ENCODE measurements at regions of chr18 and their contacts with region 1.

Region 1: GRCh38 chr18:74597662-74598349 is at the start of gene ZNF407:
- DNase-seq: peak; percentile 75 to 93 (median 83)
- ATAC-seq: peak; percentile 76
- H3K4me3 ChIP-seq: peak within 1 kb of the TSS; percentile 87
- H3K4me3 Mint-ChIP-seq: peak within 1 kb of the TSS; percentile 98
- H3K27ac ChIP-seq: peak within 1 kb of the TSS; percentile 96 to 98
- H3K27ac Mint-ChIP-seq: peak within 1 kb of the TSS; percentile 100
- H3K4me1 ChIP-seq: peaks cover 25% of the 10 kb centered on the region
- H3K4me1 Mint-ChIP-seq: peaks cover 71% of the 10 kb centered on the region
- H3K27me3 ChIP-seq: no peaks in the 10 kb centered on the region
- H3K27me3 Mint-ChIP-seq: no peaks in the 10 kb centered on the region
- CTCF ChIP-seq: no peak
- total RNA-seq, gene ZNF407: 23.2 to 24.7 TPM

Region 2: DNA sequence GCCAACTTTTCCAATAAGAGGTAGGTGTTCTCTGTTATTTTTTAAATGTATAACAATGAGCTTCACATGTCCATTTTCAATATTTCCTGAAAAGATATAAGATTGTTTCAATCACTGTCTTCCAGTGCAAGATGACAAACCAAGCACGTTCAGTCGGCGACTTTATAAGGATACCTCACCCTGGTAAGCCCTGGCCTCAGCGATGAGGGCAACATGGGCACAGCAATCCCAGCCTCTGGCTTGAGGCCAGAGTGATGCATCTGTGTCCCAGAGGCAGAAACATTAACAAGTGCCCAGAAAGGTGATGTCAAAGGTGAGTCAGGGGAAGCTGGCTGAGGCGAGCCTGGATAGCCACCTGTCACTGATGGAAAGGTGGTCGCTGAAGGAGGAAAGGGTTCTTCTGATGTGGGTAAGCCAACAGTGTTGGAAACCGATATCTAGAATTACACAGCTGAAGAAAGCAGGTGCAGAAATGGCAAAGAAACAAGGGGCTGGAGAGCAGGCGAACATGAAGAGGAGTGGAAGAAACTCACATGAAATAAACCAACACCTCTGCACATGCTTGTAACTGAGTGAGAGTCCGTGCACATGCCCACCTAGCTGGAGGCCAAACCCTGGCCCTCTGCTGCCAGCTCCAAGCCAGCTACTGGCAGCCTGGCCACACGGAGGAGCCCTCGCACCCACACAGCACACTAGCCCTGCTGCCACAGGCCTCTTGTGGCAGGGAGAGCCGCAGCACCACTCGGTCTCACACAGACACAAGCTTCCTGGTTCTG is 515.7 kb before region 1 on chr18:
- CTCF ChIA-PET with region 1: no interaction called
- POLR2A ChIA-PET with region 1: interaction called, 12 read pairs
- intact Hi-C with region 1: no loop called
- DNase-seq: peak; percentile 43 to 84 (median 62)
- ATAC-seq: peak; percentile 97
- H3K4me3 ChIP-seq: peak overlapping the region; percentile 38
- H3K4me3 Mint-ChIP-seq: peak overlapping the region; percentile 78
- H3K27ac ChIP-seq: peak overlapping the region; percentile 61 to 74
- H3K27ac Mint-ChIP-seq: peak overlapping the region; percentile 85
- H3K4me1 ChIP-seq: peaks cover 16% of the 10 kb centered on the region
- H3K4me1 Mint-ChIP-seq: peaks cover 22% of the 10 kb centered on the region
- H3K27me3 ChIP-seq: no peaks in the 10 kb centered on the region
- H3K27me3 Mint-ChIP-seq: no peaks in the 10 kb centered on the region
- CTCF ChIP-seq: peak; percentile 60

Region 3: GRCh38 chr18:74291771-74292540 is 305.9 kb before region 1 on chr18 and contains the start of gene CYB5A:
- CTCF ChIA-PET with region 1: no interaction called
- POLR2A ChIA-PET with region 1: interaction called, 3 read pairs
- intact Hi-C with region 1: loop called in 1 of 2 experiments (anchors 5 kb)
- DNase-seq: peak; percentile 97 to 99 (median 98)
- ATAC-seq: peak; percentile 96
- H3K4me3 ChIP-seq: peak within 1 kb of the TSS; percentile 99
- H3K4me3 Mint-ChIP-seq: no peak within 1 kb of the TSS
- H3K27ac ChIP-seq: peak within 1 kb of the TSS in 1 of 2 donors; percentile 61
- H3K27ac Mint-ChIP-seq: peak within 1 kb of the TSS; percentile 35
- H3K4me1 ChIP-seq: peaks cover 19% of the 10 kb centered on the region
- H3K4me1 Mint-ChIP-seq: peaks cover 12% of the 10 kb centered on the region
- H3K27me3 ChIP-seq: no peaks in the 10 kb centered on the region
- H3K27me3 Mint-ChIP-seq: no peaks in the 10 kb centered on the region
- CTCF ChIP-seq: peak; percentile 20
- total RNA-seq, gene CYB5A: 3.7 to 4.1 TPM

Region 4: GRCh38 chr18:74370115-74370514 is 227.7 kb before region 1 on chr18:
- CTCF ChIA-PET with region 1: no interaction called
- POLR2A ChIA-PET with region 1: interaction called, 9 read pairs
- intact Hi-C with region 1: loop called in 1 of 2 experiments (anchors 1 kb)
- DNase-seq: no peak
- ATAC-seq: no peak
- H3K4me3 ChIP-seq: no peak overlapping the region
- H3K4me3 Mint-ChIP-seq: no peak overlapping the region
- H3K27ac ChIP-seq: no peak overlapping the region
- H3K27ac Mint-ChIP-seq: no peak overlapping the region
- H3K4me1 ChIP-seq: peaks cover 31% of the 10 kb centered on the region
- H3K4me1 Mint-ChIP-seq: peaks cover 46% of the 10 kb centered on the region
- H3K27me3 ChIP-seq: no peaks in the 10 kb centered on the region
- H3K27me3 Mint-ChIP-seq: no peaks in the 10 kb centered on the region
- CTCF ChIP-seq: no peak

Region 5: GRCh38 chr18:74631623-74632283 is 33.9 kb after region 1 on chr18:
- CTCF ChIA-PET with region 1: interaction called, 4 read pairs
- POLR2A ChIA-PET with region 1: interaction called, 53 read pairs
- intact Hi-C with region 1: no loop called
- DNase-seq: peak in 9 of 14 experiments; percentile 1 to 61 (median 36)
- ATAC-seq: peak; percentile 90
- H3K4me3 ChIP-seq: peak overlapping the region; percentile 34
- H3K4me3 Mint-ChIP-seq: peak overlapping the region; percentile 81
- H3K27ac ChIP-seq: peak overlapping the region; percentile 13 to 66
- H3K27ac Mint-ChIP-seq: peak overlapping the region; percentile 90
- H3K4me1 ChIP-seq: peaks cover 27% of the 10 kb centered on the region
- H3K4me1 Mint-ChIP-seq: peaks cover 59% of the 10 kb centered on the region
- H3K27me3 ChIP-seq: no peaks in the 10 kb centered on the region
- H3K27me3 Mint-ChIP-seq: no peaks in the 10 kb centered on the region
- CTCF ChIP-seq: no peak

Region 6: GRCh38 chr18:74722237-74722636 is 124.4 kb after region 1 on chr18:
- CTCF ChIA-PET with region 1: no interaction called
- POLR2A ChIA-PET with region 1: no interaction called
- intact Hi-C with region 1: no loop called
- DNase-seq: no peak
- ATAC-seq: no peak
- H3K4me3 ChIP-seq: no peak overlapping the region
- H3K4me3 Mint-ChIP-seq: no peak overlapping the region
- H3K27ac ChIP-seq: no peak overlapping the region
- H3K27ac Mint-ChIP-seq: no peak overlapping the region
- H3K4me1 ChIP-seq: no peaks in the 10 kb centered on the region
- H3K4me1 Mint-ChIP-seq: peaks cover 31% of the 10 kb centered on the region
- H3K27me3 ChIP-seq: no peaks in the 10 kb centered on the region
- H3K27me3 Mint-ChIP-seq: no peaks in the 10 kb centered on the region
- CTCF ChIP-seq: no peak